ENCODE measurements at regions of chr13 and their contacts with region 1.

Region 1: DNA sequence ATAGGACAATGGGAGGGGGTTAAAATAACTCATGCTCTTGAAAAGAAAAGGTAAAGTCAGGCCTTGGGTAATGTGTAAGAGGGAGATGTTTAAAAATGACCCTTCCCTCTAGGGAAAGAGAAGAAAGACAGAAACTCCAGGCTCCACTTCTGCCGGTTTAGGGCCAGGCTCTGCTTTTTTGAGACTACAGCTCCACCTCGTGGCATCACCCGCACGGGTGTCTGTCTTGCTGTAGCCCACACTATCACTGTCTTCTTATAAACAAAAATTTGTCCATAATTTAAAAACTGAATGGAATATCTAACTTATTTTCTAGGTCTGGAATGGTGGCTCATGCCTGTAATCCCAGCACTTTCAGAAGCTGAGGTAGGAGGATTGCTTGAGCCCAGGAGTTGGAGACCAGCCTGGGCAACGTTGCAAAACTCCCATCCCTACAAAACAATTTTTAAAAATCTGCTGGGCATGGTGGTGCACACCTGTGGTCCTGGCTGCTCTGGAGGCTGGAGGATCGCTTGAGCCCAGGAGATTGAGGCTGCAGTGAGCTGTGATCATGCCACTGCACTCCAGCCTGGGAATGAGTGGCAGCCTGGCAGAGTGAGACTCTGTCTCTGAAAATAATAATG is 65.1 kb upstream of the GTF3A start:
- DNase-seq: peak; percentile 77
- ATAC-seq: peak; percentile 77
- H3K4me3 ChIP-seq: no peak overlapping the region
- H3K27ac ChIP-seq: no peak overlapping the region
- H3K4me1 ChIP-seq: peaks cover 5% of the 10 kb centered on the region
- H3K27me3 ChIP-seq: peaks cover 7% of the 10 kb centered on the region
- CTCF ChIP-seq: peak; percentile 80

Region 2: GRCh38 chr13:26985285-26985878 is 373.9 kb before region 1 on chr13:
- intact Hi-C with region 1: loop called (anchors 5 kb)
- DNase-seq: no peak
- ATAC-seq: peak; percentile 83
- H3K4me3 ChIP-seq: no peak overlapping the region
- H3K27ac ChIP-seq: no peak overlapping the region
- H3K4me1 ChIP-seq: peaks cover 12% of the 10 kb centered on the region
- H3K27me3 ChIP-seq: no peaks in the 10 kb centered on the region
- CTCF ChIP-seq: peak; percentile 82

Region 3: GRCh38 chr13:27728271-27728670 is 369.0 kb after region 1 on chr13:
- intact Hi-C with region 1: no loop called
- DNase-seq: no peak
- ATAC-seq: no peak
- H3K4me3 ChIP-seq: no peak overlapping the region
- H3K27ac ChIP-seq: no peak overlapping the region
- H3K4me1 ChIP-seq: no peaks in the 10 kb centered on the region
- H3K27me3 ChIP-seq: no peaks in the 10 kb centered on the region
- CTCF ChIP-seq: no peak

Measured in upper lobe of right lung (tissue), 1 donor.